Left cardiac atrium (tissue), 4 donors: ENCODE measurements at regions of chr11 and their contacts with region 1.

Region 1: DNA sequence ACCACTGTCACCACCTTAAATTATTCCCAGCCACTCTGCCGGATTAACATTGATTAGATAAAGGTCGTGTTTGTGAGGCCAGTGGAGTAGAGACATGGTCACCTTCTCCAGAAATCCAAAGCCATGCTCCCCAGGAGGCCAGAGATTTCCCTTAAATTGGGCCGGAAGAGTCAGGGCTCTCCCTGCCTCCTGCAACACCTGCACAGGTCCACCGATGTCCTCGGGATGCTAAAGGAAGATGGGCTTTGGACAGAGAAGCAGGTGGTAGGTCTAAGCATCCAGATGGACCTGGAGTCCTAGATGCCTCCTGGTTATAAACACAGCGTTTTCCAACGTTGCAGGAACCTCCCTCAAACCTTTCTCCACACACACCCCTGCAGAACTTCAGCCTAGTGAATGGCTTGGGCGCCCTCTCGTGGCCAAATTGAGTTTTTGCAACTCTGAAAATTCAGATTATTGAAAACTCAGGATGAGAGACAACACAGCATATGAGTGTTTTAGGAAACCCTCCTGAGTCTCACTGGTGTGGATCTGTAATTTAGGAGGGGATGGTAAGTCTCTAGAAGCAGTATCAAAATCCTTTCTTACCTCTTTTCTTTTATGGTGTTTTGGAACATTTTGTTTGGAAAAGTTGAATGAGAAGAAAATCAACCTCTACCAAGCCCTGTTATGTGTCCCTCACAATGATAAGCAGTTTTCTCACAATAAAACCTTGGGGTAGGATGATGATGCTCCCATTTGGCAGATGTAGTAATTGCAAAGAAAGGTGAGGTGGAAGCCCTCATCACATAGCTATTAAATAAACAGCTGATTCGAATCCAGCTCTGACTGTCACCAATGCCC is 109.6 kb downstream of the RRAS2 start:
- DNase-seq: peak; percentile 63
- ATAC-seq: peak; percentile 68 to 69

Region 2: GRCh38 chr11:13772223-13773046 is 476.9 kb before region 1 on chr11:
- intact Hi-C with region 1: loop called (anchors 5 to 10 kb)
- DNase-seq: no peak
- ATAC-seq: peak in 1 of 2 donors; percentile 58

Region 3: DNA sequence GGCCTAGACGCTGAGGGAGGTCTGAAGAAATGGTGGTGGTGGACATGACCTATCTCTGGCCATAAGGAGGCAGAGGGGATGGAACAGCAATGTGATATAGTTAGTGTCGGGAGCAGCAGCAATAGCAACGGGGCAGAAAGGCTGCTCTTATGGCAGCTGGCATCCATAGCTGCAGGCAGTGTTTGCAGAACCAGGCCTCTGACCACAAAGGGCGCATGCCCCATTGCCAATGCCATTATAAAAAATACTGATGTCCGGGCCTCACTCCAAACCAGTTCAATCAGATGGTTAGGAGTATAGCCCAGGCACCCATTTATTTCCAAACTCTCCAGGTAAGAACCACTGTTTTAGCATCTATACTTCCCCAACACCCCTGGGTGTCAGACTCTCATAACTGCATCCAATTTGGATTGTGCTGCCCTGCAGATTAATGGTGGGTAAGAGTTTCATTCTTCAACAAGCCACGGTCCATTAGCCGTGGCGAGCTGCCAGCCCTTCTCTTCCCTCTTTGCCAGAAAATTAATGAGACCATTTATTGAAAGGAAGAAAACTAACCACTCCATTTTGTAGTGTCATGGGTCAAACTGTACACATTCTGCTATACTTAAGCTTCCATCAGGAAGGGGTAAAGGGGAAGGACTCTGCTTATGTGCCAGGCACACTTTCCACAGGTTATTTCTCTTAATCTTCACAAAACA is 359.6 kb before region 1 on chr11:
- intact Hi-C with region 1: no loop called
- DNase-seq: no peak
- ATAC-seq: no peak

Region 4: GRCh38 chr11:13955971-13956421 is 293.3 kb before region 1 on chr11:
- intact Hi-C with region 1: loop called (anchors 1 to 2 kb)
- DNase-seq: peak; percentile 47
- ATAC-seq: peak; percentile 53 to 73